ENCODE measurements at regions of chr6 and their contacts with region 1.

Region 1: DNA sequence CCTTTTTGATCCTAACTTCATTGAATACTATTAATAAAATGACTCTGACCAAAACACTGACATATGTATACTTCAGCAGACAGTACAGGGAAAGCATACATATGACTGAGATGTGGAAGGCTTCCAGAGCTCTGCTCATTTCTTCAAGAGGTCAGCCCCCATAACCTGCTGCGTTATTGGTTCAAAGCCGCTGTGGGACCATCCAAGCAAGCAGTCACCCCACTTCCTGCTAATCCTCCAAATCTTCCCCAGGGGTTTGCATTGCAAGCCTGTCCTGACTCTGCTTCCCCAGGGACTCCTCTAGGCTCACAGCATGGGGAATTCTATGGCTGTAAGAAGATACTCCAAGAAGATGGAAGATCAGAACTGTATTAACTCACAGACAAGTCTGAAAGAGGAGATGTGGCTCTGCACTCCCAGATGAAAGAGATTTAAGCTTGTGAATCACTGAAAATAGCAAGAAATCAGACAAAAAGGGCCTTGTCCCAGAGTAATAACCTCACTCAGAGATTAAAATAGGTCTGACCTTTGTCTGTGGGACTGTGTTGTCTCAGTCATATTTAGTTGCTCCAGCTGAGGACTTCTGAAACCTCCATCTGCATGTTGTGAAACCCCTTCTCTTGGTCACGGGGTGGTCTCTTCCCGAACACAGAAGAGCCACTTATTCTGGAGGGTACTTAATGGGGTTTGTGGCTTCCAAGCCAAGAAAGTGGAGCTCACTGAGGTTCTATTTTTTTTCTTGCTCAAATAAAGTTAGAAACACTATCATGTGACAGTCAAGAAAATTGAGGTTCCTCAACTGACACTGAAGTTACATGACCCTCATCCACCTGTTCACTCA is 101.5 kb upstream of the MARCKS start:
- H3K4me3 Mint-ChIP-seq: no peak overlapping the region
- H3K27ac Mint-ChIP-seq: no peak overlapping the region
- H3K4me1 Mint-ChIP-seq: peaks cover 50% of the 10 kb centered on the region
- H3K27me3 Mint-ChIP-seq: no peaks in the 10 kb centered on the region

Region 2: DNA sequence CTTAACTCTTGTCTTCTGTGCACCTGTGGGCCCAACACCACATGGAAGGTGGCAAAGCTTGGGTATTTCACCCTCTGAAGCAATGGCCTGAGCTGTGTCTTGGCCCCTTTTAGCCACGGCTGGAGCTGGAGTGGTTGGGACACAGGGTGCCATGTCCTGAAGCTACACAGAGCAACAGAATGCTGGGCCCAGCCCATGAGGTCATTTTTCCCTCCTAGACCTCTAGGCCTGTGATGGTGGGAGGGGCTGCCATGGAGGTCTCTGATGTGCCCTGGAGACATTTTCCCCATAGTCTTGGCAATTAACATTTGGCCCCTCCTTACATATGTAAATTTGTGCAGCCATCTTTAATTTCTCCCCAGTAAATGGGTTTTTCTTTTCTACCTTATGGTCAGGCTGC is 787.7 kb before region 1 on chr6:
- intact Hi-C with region 1: no loop called
- H3K4me3 Mint-ChIP-seq: no peak overlapping the region
- H3K27ac Mint-ChIP-seq: no peak overlapping the region
- H3K4me1 Mint-ChIP-seq: no peaks in the 10 kb centered on the region
- H3K27me3 Mint-ChIP-seq: no peaks in the 10 kb centered on the region

Region 3: DNA sequence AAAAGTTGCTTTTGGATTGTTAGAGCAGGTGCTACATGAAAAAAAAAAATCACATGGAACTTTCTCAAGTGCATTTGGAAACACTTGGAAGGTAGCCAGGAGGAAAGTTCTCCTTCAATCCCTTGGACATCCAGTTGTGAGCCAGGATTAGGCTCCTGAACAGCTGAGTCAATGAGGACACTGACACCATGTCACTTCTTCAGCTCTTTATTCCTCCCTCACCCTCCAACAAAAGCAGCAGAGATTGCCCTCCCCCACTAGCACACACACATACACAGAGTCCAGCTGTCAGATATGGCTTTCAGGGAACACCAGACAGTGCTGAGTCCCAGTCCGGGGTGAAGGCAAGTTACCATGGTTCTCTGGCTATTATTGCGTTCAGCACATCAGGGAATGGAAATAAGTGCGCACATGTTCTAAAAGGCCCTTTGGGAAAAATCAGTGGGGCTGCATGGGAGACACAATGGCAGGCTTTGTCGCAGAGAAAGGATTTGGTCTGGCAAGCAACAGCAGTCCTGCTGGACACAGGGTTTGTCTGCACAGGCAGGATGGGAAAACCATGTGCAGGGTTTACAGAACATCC is 23.2 kb before region 1 on chr6:
- intact Hi-C with region 1: no loop called
- H3K4me3 Mint-ChIP-seq: no peak overlapping the region
- H3K27ac Mint-ChIP-seq: no peak overlapping the region
- H3K4me1 Mint-ChIP-seq: peaks cover 20% of the 10 kb centered on the region
- H3K27me3 Mint-ChIP-seq: no peaks in the 10 kb centered on the region

Region 4: GRCh38 chr6:113792851-113793250 is 37.2 kb after region 1 on chr6:
- intact Hi-C with region 1: loop called (anchors 5 kb)
- H3K4me3 Mint-ChIP-seq: no peak overlapping the region
- H3K27ac Mint-ChIP-seq: no peak overlapping the region
- H3K4me1 Mint-ChIP-seq: peaks cover 23% of the 10 kb centered on the region
- H3K27me3 Mint-ChIP-seq: no peaks in the 10 kb centered on the region